ENCODE measurements at regions of chr3 and their contacts with region 1.

Region 1: GRCh38 chr3:180594631-180595558 is 7.1 kb upstream of the TTC14 start:
- DNase-seq: no peak
- H3K4me3 ChIP-seq: no peak overlapping the region
- H3K27ac ChIP-seq: no peak overlapping the region
- H3K4me1 ChIP-seq: no peaks in the 10 kb centered on the region
- H3K27me3 ChIP-seq: no peaks in the 10 kb centered on the region
- CTCF ChIP-seq: peak; percentile 38 to 72 (median 47)
- EP300 ChIP-seq: no peak
- POLR2A ChIP-seq: no peak

Region 2: DNA sequence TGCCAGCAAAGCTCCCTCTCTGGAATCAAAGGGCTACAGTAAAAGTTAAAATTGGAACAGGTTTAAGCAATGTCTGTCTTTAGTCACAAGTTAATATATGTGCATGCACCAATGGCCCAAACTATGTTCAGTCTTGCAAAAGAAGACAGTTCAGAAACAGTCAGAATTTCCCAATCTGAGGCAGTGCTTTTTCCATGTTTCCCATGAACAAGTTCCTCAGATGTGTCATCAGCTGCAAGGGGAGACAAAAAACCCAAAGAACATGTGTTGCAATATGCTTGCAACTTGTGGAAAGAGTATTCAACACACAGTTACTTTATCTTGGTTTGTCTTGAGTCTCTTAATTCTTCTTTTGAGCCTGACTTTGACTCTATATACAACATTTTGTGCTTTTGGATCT is 793.6 kb before region 1 on chr3:
- intact Hi-C with region 1: loop called in 1 of 4 experiments (anchors 10 kb)
- DNase-seq: no peak
- H3K4me3 ChIP-seq: no peak overlapping the region
- H3K27ac ChIP-seq: no peak overlapping the region
- H3K4me1 ChIP-seq: no peaks in the 10 kb centered on the region
- H3K27me3 ChIP-seq: no peaks in the 10 kb centered on the region
- CTCF ChIP-seq: no peak
- EP300 ChIP-seq: no peak
- POLR2A ChIP-seq: no peak

Region 3: GRCh38 chr3:179811321-179812095 is 783.4 kb before region 1 on chr3:
- intact Hi-C with region 1: loop called in 3 of 4 experiments (anchors 5 to 10 kb)
- DNase-seq: peak in 2 of 5 donors; percentile 16 to 43
- H3K4me3 ChIP-seq: no peak overlapping the region
- H3K27ac ChIP-seq: no peak overlapping the region
- H3K4me1 ChIP-seq: no peaks in the 10 kb centered on the region
- H3K27me3 ChIP-seq: no peaks in the 10 kb centered on the region
- CTCF ChIP-seq: peak in 2 of 3 donors; percentile 23 to 39
- EP300 ChIP-seq: no peak
- POLR2A ChIP-seq: no peak

Region 4: GRCh38 chr3:179929091-179929529 is 665.8 kb before region 1 on chr3:
- intact Hi-C with region 1: loop called in 3 of 4 experiments (anchors 5 to 10 kb)
- DNase-seq: peak; percentile 38 to 66 (median 64)
- H3K4me3 ChIP-seq: no peak overlapping the region
- H3K27ac ChIP-seq: no peak overlapping the region
- H3K4me1 ChIP-seq: no peaks in the 10 kb centered on the region
- H3K27me3 ChIP-seq: no peaks in the 10 kb centered on the region
- CTCF ChIP-seq: peak; percentile 18 to 47 (median 24)
- EP300 ChIP-seq: no peak
- POLR2A ChIP-seq: no peak

Region 5: DNA sequence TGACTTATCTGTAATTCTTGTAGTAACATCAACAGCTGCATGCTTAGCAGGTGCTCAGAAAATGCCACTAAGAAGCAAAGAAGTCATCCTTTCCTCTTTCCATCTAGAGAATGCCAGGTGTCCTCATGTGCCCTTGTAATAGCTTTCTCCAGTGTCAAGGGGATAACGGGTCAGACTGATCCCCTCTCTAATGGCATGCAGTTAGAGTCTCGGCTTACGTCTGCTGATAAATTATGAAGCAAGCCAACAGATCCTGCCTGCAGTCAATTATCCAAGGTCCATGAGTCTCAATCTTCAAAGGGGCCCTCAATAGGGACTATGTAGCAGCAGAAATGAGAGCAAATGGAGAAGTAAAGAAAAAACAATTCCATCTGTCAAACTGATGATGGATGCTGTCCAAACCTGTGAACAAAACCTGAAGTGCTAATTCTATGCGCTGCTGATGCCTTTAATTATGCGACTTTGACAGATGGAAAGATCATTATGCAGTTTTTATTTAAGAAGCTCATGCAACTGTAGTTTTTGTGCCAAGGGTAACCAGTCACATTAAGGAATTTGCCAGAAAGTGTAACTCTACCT is 395.4 kb before region 1 on chr3:
- intact Hi-C with region 1: no loop called
- DNase-seq: no peak
- H3K4me3 ChIP-seq: no peak overlapping the region
- H3K27ac ChIP-seq: no peak overlapping the region
- H3K4me1 ChIP-seq: no peaks in the 10 kb centered on the region
- H3K27me3 ChIP-seq: no peaks in the 10 kb centered on the region
- CTCF ChIP-seq: no peak
- EP300 ChIP-seq: no peak
- POLR2A ChIP-seq: no peak

Region 6: GRCh38 chr3:180320631-180321030 is 274.3 kb before region 1 on chr3:
- intact Hi-C with region 1: no loop called
- DNase-seq: no peak
- H3K4me3 ChIP-seq: no peak overlapping the region
- H3K27ac ChIP-seq: no peak overlapping the region
- H3K4me1 ChIP-seq: no peaks in the 10 kb centered on the region
- H3K27me3 ChIP-seq: no peaks in the 10 kb centered on the region
- CTCF ChIP-seq: no peak
- EP300 ChIP-seq: no peak
- POLR2A ChIP-seq: no peak